ENCODE measurements at regions of chr7 and their contacts with region 1.

Region 1: GRCh38 chr7:77351539-77352004 is 64.6 kb downstream of the GSAP start:
- DNase-seq: peak; percentile 53
- H3K4me3 Mint-ChIP-seq: peak overlapping the region; percentile 81
- H3K27ac Mint-ChIP-seq: peak overlapping the region; percentile 90
- H3K4me1 Mint-ChIP-seq: peaks cover 58% of the 10 kb centered on the region
- H3K27me3 Mint-ChIP-seq: peaks cover 5% of the 10 kb centered on the region

Region 2: GRCh38 chr7:77331938-77332695 is 19.5 kb before region 1 on chr7:
- intact Hi-C with region 1: loop called (anchors 2 kb)
- DNase-seq: peak; percentile 44
- H3K4me3 Mint-ChIP-seq: no peak overlapping the region
- H3K27ac Mint-ChIP-seq: no peak overlapping the region
- H3K4me1 Mint-ChIP-seq: peaks cover 48% of the 10 kb centered on the region
- H3K27me3 Mint-ChIP-seq: no peaks in the 10 kb centered on the region

Region 3: GRCh38 chr7:77393269-77393668 is 41.7 kb after region 1 on chr7:
- intact Hi-C with region 1: loop called (anchors 5 kb)
- DNase-seq: no peak
- H3K4me3 Mint-ChIP-seq: no peak overlapping the region
- H3K27ac Mint-ChIP-seq: peak overlapping the region; percentile 13
- H3K4me1 Mint-ChIP-seq: peaks cover 20% of the 10 kb centered on the region
- H3K27me3 Mint-ChIP-seq: no peaks in the 10 kb centered on the region

Region 4: GRCh38 chr7:77415823-77416622 is 64.5 kb after region 1 on chr7 and contains the start of gene GSAP:
- intact Hi-C with region 1: loop called (anchors 5 kb)
- DNase-seq: peak; percentile 38
- H3K4me3 Mint-ChIP-seq: peak within 1 kb of the TSS; percentile 50
- H3K27ac Mint-ChIP-seq: peak within 1 kb of the TSS; percentile 58
- H3K4me1 Mint-ChIP-seq: peaks cover 20% of the 10 kb centered on the region
- H3K27me3 Mint-ChIP-seq: peaks cover 30% of the 10 kb centered on the region
- total RNA-seq, gene GSAP: 1.3 and 1.6 TPM in 2 replicates

Measured in activated T-helper 1 cell treated with anti-CD3 and anti-CD28 coated beads, Interleukin-12 subunit alpha, Interleukin-12 subunit beta, Interleukin-2, Interleukin-4 antibody, amounts not matched to agents 30 ng/mL and 10 ng/mL and 1 ng/mL, durations not matched to agents 14 hours and 24 hours and 36 hours (primary cell).